Activated CD8-positive, alpha-beta T cell treated with anti-CD3 and anti-CD28 coated beads, Interleukin-2, amount 10 ng/mL, durations not matched to agents 7 days and 5 days (primary cell): ENCODE measurements at regions of chr19 and their contacts with region 1.

Region 1: GRCh38 chr19:11798391-11799330 is at the start of gene ZNF491:
- DNase-seq: peak; percentile 91
- ATAC-seq: peak; percentile 99
- H3K4me3 Mint-ChIP-seq: peak within 1 kb of the TSS; percentile 85
- H3K27ac Mint-ChIP-seq: peak within 1 kb of the TSS; percentile 85
- H3K4me1 Mint-ChIP-seq: peaks cover 14% of the 10 kb centered on the region
- H3K27me3 Mint-ChIP-seq: peaks cover 4% of the 10 kb centered on the region
- total RNA-seq, gene ZNF491: 1.8 to 2.1 TPM

Region 2: DNA sequence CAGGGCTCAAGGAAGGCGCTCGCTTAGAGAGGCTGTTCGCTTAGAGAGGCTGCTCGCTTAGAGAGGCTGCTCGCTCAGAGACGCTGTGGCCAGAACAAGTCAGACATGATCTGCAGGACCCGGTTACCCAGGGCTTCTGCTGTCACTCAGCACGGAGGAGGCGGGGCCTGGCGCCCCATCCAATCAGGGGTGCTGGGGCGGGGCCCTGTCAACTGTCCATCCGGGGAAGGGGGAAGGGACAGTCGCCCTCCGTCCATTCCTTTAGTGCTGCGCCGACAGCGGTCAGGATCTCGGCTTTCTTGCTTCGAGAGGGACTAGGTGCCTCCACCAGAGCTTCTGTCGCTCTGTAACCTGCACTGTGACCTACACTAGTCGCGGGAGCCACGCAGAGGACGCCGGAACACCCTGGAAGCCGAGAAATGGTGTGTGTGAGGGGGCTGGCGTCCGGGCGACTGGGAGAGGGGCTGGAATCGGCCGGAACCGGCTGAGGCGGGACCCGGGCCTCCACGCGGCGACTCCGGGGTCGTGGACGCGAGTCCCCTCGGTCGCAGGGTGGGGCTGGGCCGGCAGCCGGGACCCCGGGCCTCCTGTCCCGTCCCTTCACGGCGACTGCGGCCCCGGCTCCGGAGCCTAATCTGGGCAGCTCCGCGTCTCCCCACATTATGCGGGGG is 15.5 kb after region 1 on chr19 and contains the start of gene ZNF440:
- CTCF ChIA-PET with region 1: interaction called, 44 read pairs
- POLR2A ChIA-PET with region 1: interaction called, 6 read pairs
- DNase-seq: peak; percentile 94
- ATAC-seq: peak; percentile 100
- H3K4me3 Mint-ChIP-seq: peak within 1 kb of the TSS; percentile 89
- H3K27ac Mint-ChIP-seq: peak within 1 kb of the TSS; percentile 88
- H3K4me1 Mint-ChIP-seq: peaks cover 23% of the 10 kb centered on the region
- H3K27me3 Mint-ChIP-seq: no peaks in the 10 kb centered on the region
- total RNA-seq, gene ZNF440: 15.2 to 17.7 TPM

Region 3: DNA sequence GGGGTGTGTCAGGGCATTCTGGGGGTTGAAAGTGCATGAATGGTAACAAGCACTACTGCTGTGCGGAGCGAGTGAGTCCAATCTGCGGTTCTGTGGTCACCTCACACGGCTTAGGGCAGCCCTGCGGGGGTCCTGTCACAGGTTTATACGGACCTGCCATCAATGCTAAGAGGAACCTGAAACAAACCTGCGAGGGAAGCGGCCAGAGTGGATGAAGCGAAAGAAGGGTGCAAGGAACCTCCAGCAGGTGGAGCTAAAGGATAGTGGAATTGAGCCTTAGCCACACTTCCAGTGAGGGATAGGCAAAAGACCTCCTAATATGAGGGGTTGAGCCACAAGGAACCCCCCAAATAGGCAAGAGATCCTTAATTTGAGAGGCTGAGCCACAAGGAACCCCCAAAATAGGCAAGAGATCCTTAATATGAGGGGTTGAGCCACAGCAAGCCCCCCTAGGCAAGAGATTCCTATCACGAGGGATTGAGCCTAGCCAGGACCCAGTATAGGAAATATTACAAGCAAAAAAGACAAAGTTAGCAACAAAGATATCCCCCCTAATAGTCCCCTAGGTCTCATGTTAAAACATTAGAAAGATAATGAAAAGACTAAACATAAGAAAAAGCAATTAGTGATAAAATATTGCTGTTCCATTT is 82.6 kb after region 1 on chr19:
- CTCF ChIA-PET with region 1: interaction called, 23 read pairs
- POLR2A ChIA-PET with region 1: no interaction called
- DNase-seq: peak; percentile 77
- ATAC-seq: peak; percentile 82
- H3K4me3 Mint-ChIP-seq: no peak overlapping the region
- H3K27ac Mint-ChIP-seq: no peak overlapping the region
- H3K4me1 Mint-ChIP-seq: no peaks in the 10 kb centered on the region
- H3K27me3 Mint-ChIP-seq: peaks cover 6% of the 10 kb centered on the region

Region 4: DNA sequence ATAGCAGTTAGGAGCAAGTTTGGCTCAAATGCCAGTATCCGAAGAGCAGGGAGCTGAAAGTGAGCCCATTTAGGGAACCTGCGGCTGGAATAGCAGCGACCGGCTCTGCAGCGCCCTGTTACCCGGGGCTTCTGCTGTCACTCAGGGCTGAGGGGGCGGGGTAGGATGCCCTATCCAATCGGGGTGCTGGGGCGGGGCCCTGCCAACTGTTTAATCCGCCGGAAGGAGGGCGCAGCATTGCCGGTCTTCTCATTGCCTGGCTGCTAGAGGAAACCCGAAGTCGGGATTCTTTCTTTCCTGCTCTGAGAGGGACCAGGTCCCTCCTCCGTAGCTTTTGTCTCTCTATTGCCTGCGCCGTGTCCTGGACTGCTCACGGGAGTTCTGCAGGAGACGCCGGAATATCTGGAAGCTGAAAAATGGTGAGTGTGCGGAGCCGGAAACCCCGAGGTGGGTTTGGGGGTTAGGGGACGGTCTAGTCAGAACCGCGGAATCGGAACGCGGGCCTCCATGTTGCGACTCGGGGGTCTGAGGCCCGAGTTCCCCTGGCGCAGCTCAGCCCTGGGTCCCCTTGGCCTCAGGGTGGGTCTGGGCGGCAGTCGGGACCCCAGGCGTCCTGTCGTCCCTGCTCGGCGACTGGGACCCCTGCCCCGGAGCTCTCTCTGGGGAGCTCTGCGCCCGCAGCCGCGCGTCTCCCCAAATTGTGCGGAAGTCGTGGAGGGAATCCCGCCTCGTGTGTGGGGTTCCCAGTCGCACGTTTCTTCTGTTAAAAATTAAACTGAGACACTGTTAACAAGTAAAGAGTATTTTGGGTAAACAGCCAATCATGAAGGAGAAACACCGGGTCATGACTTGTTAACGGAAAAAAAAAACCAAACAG is 189.0 kb after region 1 on chr19:
- CTCF ChIA-PET with region 1: interaction called, 27 read pairs
- POLR2A ChIA-PET with region 1: interaction called, 6 read pairs
- DNase-seq: peak; percentile 97
- ATAC-seq: peak; percentile 96
- H3K4me3 Mint-ChIP-seq: peak overlapping the region; percentile 99
- H3K27ac Mint-ChIP-seq: peak overlapping the region; percentile 98
- H3K4me1 Mint-ChIP-seq: peaks cover 27% of the 10 kb centered on the region
- H3K27me3 Mint-ChIP-seq: no peaks in the 10 kb centered on the region